ENCODE measurements at regions of chrX and their contacts with region 1.

Region 1: DNA sequence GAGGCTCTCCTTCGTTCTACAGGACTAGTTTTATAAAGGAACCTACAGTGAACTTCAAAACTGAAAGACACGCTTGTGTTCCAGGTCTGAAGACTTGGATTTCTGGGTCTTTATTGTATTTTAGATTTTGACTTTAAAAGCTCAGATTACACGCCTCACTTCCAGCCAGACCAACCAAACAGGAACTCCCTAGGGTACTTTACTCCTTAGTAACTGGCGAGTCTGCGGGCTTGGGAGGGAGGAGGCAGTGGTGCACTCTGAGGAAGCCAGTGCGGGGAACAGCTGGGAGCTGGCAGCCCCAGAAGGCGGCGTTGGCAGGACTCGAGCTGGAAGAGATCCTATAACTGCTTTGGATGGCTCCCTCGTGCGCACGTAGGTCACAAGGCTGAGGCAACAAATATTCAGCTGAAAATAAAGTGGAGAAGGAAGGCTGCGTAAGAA is 390 bp upstream of the PHKA1 start:
- DNase-seq: peak; percentile 56
- H3K4me3 Mint-ChIP-seq: peak overlapping the region; percentile 91
- H3K27ac Mint-ChIP-seq: peak overlapping the region; percentile 63
- H3K4me1 Mint-ChIP-seq: peaks cover 15% of the 10 kb centered on the region
- H3K27me3 Mint-ChIP-seq: no peaks in the 10 kb centered on the region
- CTCF ChIP-seq: no peak

Region 2: DNA sequence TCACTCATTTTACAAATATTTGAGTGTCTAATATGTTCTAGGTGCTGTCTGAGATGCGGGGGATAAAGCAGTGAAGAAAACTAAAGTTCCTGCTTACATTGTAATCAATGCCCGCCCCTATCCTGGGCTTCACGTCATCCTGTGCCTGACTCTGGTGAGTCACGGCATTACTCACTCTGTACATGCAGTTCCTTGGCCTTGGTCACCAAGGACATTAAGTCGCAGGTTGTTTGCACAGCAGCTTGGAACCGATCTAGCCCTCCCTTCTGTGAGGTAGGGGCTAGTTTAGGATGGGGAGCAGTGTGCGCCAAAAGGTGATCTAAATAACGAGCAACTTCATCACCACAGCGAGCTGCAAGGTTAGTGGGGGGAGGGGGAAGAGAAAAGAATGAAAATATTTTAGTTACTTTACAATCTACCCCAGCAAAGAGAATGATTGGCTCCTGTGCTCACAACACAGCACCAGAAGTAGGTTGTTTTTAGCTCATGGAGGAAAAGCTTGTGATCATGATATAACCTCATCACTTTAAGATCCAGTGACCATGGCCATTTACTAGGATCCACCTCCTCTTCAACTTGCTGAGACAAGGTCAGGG is 93.8 kb before region 1 on chrX:
- CTCF ChIA-PET with region 1: no interaction called
- intact Hi-C with region 1: loop called (anchors 5 kb)
- DNase-seq: peak; percentile 73
- H3K4me3 Mint-ChIP-seq: peak overlapping the region; percentile 53
- H3K27ac Mint-ChIP-seq: peak overlapping the region; percentile 85
- H3K4me1 Mint-ChIP-seq: peaks cover 36% of the 10 kb centered on the region
- H3K27me3 Mint-ChIP-seq: no peaks in the 10 kb centered on the region
- CTCF ChIP-seq: no peak

Region 3: GRCh38 chrX:72634331-72634730 is 80.2 kb before region 1 on chrX:
- CTCF ChIA-PET with region 1: no interaction called
- intact Hi-C with region 1: no loop called
- DNase-seq: no peak
- H3K4me3 Mint-ChIP-seq: no peak overlapping the region
- H3K27ac Mint-ChIP-seq: no peak overlapping the region
- H3K4me1 Mint-ChIP-seq: no peaks in the 10 kb centered on the region
- H3K27me3 Mint-ChIP-seq: no peaks in the 10 kb centered on the region
- CTCF ChIP-seq: no peak

Measured in Calu3 (cell line).